BJ (cell line): ENCODE measurements at regions of chr1 and their contacts with region 1.

Region 1: DNA sequence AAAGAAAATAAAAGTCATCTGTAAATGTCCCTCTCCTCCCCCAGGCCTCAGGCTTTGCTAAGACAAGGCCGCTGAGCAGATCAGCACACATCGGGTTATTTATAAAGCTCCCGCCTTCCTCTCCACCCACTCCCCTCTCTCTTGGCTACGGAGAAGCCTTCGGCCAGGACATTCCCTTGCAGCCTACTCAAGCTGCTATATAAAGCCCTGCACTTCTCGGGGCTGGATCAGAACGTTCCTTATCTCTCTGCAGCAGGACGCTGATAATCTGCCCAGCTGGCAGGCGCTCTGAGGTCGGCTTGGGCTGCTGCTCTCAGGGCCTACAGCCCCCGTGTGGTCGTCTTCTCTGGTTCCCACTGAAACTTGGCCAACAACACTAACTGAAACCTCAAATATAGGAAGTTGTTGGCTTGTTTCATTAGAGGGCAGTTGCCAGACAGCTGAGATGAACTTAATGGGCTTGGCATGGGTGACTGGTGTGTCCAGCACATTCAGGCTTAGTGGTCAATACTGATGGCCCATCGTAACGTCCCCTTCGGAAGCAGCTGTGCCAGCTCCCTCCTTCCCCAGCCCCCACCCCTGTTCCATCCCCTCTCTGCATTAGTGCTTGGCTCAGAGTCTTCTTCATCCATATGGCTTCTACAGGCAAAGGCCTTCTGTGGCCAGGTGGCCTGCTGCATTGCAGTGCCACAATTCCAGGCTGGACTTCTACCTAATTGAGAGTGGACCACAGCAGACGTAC is 64.6 kb downstream of the IER5 start:
- DNase-seq: no peak
- H3K4me3 ChIP-seq: no peak overlapping the region
- H3K27me3 ChIP-seq: no peaks in the 10 kb centered on the region
- CTCF ChIP-seq: peak; percentile 43

Region 2: GRCh38 chr1:181166377-181167196 is 13.5 kb after region 1 on chr1:
- CTCF ChIA-PET with region 1: interaction called, 47 read pairs
- POLR2A ChIA-PET with region 1: no interaction called
- DNase-seq: no peak
- H3K4me3 ChIP-seq: no peak overlapping the region
- H3K27me3 ChIP-seq: 0 out of 2 replicates have a peak, but pooled peaks cover 3% of the 10 kb centered on the region
- CTCF ChIP-seq: peak; percentile 78